ENCODE measurements at regions of chr22 and their contacts with region 1.

Region 1: DNA sequence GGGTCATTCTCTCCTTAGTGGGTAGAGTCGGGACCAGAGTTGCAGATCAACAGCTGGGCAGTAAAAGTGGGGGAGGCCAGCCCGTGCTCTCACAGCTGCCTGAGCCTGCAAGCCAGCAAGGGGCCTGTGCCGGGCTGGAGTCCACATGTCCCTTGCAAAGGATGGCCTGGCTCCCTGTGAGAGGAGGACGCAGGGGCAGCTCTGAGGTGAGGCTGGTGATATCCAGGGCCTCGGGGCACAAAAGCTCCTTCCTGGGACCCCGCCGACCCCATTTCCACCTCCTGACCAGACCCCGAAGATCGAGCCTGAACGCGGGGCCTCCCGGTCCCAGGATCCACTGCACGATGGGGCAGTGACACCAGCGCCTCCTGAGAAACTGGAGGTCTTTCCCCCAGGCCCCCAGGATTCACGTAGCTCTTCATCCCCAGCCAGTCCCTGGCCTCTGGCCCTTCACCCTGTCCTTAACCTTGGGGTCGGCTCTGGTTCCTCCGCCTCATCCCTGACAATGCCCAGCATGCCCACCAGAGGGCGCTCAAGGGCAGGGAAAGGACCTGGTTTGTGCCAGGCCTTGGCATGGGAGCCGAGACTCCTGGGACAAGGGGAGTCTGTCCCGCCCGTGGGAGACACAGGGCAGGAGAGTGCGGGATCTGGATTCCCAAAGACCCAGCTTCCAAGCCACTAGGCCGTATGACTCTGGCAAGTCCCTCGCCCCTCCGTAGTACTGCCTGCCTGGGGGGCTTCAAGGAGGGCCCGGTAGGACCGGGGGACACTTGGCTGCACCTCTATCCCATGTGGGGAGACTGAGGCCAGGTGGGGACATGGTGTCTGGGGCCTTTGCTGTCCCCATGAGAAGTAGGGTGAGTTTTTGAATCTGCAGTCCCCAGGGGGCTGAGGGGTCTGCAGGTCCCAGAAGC is 17.8 kb upstream of the WNT7B start:
- DNase-seq: peak; percentile 49 to 55
- ATAC-seq: peak; percentile 74 to 90
- H3K4me3 ChIP-seq: no peak overlapping the region
- H3K27ac ChIP-seq: peak overlapping the region; percentile 51 to 72; a peak in 4 of 6 replicates
- H3K4me1 ChIP-seq: no peaks in the 10 kb centered on the region
- CTCF ChIP-seq: peak; percentile 75
- EP300 ChIP-seq: no peak
- POLR2A ChIP-seq: no peak
- RAD21 ChIP-seq: peak; percentile 88 to 93

Region 2: DNA sequence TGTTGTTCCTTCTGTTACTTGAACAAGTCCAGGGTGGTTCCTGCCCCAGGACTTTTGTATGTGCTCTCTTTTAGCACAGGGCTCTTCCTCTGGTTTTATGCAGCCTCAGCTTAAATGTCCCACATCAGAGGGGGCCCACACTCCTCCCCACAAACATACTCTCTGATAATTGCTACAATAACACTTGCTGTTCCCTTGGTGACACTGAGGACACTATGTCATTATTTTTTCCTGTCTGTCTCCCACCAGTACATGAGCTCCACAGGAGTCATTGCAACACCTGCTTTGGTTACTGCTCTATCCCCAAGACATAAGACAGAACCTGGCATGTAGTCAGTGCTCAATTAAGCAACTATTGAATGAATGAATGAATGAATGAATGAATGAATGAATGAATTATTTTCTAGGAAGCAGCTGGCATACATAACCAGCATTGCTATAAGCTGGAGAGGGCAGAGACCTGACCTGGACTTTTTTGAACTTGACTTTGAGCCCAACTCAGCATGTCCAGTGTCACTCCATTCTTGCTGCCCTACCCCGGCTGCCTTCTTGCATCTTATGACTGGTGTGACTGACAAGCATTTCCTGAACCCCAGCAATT is 10.3 kb before region 1 on chr22:
- CTCF ChIA-PET with region 1: interaction called, 38 read pairs
- POLR2A ChIA-PET with region 1: no interaction called
- DNase-seq: no peak
- ATAC-seq: no peak
- H3K4me3 ChIP-seq: no peak overlapping the region
- H3K27ac ChIP-seq: no peak overlapping the region
- H3K4me1 ChIP-seq: no peaks in the 10 kb centered on the region
- CTCF ChIP-seq: no peak
- EP300 ChIP-seq: no peak
- POLR2A ChIP-seq: no peak
- RAD21 ChIP-seq: no peak

Region 3: GRCh38 chr22:46317646-46318045 is 322.9 kb after region 1 on chr22:
- CTCF ChIA-PET with region 1: interaction called, 35 read pairs
- POLR2A ChIA-PET with region 1: no interaction called
- DNase-seq: no peak
- ATAC-seq: no peak
- H3K4me3 ChIP-seq: no peak overlapping the region
- H3K27ac ChIP-seq: no peak overlapping the region
- H3K4me1 ChIP-seq: no peaks in the 10 kb centered on the region
- CTCF ChIP-seq: no peak
- EP300 ChIP-seq: no peak
- POLR2A ChIP-seq: no peak
- RAD21 ChIP-seq: no peak